Activated T-helper 1 cell treated with anti-CD3 and anti-CD28 coated beads, Interleukin-12 subunit alpha, Interleukin-12 subunit beta, Interleukin-2, Interleukin-4 antibody, amounts not matched to agents 30 ng/mL and 10 ng/mL and 1 ng/mL, durations not matched to agents 14 hours and 24 hours and 36 hours (primary cell): ENCODE measurements at regions of chr19 and their contacts with region 1.

Region 1: GRCh38 chr19:11987405-11988281 is 22.8 kb downstream of the ZNF763 start:
- DNase-seq: peak; percentile 81
- H3K4me3 Mint-ChIP-seq: peak overlapping the region; percentile 98
- H3K27ac Mint-ChIP-seq: peak overlapping the region; percentile 94
- H3K4me1 Mint-ChIP-seq: peaks cover 20% of the 10 kb centered on the region
- H3K27me3 Mint-ChIP-seq: no peaks in the 10 kb centered on the region

Region 2: GRCh38 chr19:11597202-11598102 is 390.2 kb before region 1 on chr19 and contains the start of gene ZNF627:
- intact Hi-C with region 1: loop called (anchors 5 kb)
- DNase-seq: peak; percentile 96
- H3K4me3 Mint-ChIP-seq: peak within 1 kb of the TSS; percentile 93
- H3K27ac Mint-ChIP-seq: peak within 1 kb of the TSS; percentile 89
- H3K4me1 Mint-ChIP-seq: peaks cover 10% of the 10 kb centered on the region
- H3K27me3 Mint-ChIP-seq: no peaks in the 10 kb centered on the region
- total RNA-seq, gene ZNF627: 4.3 and 5.2 TPM in 2 replicates

Region 3: DNA sequence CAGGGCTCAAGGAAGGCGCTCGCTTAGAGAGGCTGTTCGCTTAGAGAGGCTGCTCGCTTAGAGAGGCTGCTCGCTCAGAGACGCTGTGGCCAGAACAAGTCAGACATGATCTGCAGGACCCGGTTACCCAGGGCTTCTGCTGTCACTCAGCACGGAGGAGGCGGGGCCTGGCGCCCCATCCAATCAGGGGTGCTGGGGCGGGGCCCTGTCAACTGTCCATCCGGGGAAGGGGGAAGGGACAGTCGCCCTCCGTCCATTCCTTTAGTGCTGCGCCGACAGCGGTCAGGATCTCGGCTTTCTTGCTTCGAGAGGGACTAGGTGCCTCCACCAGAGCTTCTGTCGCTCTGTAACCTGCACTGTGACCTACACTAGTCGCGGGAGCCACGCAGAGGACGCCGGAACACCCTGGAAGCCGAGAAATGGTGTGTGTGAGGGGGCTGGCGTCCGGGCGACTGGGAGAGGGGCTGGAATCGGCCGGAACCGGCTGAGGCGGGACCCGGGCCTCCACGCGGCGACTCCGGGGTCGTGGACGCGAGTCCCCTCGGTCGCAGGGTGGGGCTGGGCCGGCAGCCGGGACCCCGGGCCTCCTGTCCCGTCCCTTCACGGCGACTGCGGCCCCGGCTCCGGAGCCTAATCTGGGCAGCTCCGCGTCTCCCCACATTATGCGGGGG is 173.5 kb before region 1 on chr19 and contains the start of gene ZNF440:
- intact Hi-C with region 1: loop called (anchors 1 kb)
- DNase-seq: peak; percentile 84
- H3K4me3 Mint-ChIP-seq: peak within 1 kb of the TSS; percentile 88
- H3K27ac Mint-ChIP-seq: peak within 1 kb of the TSS; percentile 69
- H3K4me1 Mint-ChIP-seq: peaks cover 13% of the 10 kb centered on the region
- H3K27me3 Mint-ChIP-seq: peaks cover 1% of the 10 kb centered on the region
- total RNA-seq, gene ZNF440: 6.7 and 9.2 TPM in 2 replicates

Region 4: DNA sequence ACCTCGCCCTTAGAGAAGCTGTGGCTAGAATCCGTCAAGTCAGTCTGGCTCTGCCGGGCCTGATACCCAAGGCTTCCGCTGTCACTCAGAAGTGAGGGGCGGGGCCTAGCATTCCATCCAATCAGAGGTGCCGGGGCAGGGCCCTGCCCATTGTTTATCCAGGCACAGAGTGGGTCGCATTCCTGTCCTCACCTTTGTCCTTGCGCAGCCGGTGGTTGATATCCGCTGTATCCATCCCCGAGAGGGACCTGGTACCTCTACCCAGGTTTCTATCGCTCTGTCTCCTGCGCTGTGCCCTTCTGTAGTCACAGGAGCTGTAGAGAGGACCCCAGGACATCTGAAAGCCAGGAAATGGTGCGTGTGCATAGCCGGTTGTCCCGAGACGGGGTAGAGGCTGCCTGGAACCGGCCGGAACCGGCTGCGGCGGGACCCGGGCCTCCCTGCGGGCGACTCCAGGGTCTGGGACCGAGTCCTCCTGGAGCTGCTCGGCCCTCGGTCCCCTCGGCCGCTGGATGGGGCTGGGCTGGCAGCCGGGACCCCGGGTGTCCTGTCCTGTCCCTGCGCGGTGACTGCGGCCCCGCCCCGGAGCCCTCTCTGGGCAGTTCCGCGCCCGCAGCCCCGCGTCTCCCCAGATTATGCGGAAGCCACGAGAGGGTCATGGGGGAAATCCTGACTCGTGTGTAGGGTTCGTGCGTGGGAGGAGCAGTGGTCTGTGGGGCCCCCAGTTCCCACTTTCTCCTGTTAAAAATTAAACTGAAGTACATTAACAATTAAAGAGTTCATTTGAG is 22.6 kb before region 1 on chr19 and contains the start of gene ZNF763:
- intact Hi-C with region 1: loop called (anchors 1 kb)
- DNase-seq: peak; percentile 69
- H3K4me3 Mint-ChIP-seq: peak within 1 kb of the TSS; percentile 81
- H3K27ac Mint-ChIP-seq: peak within 1 kb of the TSS; percentile 56
- H3K4me1 Mint-ChIP-seq: peaks cover 20% of the 10 kb centered on the region
- H3K27me3 Mint-ChIP-seq: no peaks in the 10 kb centered on the region
- total RNA-seq, gene ZNF763: 0.49 and 1.1 TPM in 2 replicates

Region 5: GRCh38 chr19:12610540-12611360 is 623.1 kb after region 1 on chr19 and contains the starts of genes ZNF490 and ZNF791:
- intact Hi-C with region 1: loop called (anchors 2 kb)
- DNase-seq: peak; percentile 96
- H3K4me3 Mint-ChIP-seq: peak within 1 kb of the TSS; percentile 100
- H3K27ac Mint-ChIP-seq: peak within 1 kb of the TSS; percentile 99
- H3K4me1 Mint-ChIP-seq: peaks cover 22% of the 10 kb centered on the region
- H3K27me3 Mint-ChIP-seq: no peaks in the 10 kb centered on the region
- total RNA-seq, gene ZNF490: 9.2 and 9.4 TPM in 2 replicates
- total RNA-seq, gene ZNF791: 23.5 and 29.0 TPM in 2 replicates